AG04449 (cell line): ENCODE measurements at regions of chr15 and their contacts with region 1.

Region 1: DNA sequence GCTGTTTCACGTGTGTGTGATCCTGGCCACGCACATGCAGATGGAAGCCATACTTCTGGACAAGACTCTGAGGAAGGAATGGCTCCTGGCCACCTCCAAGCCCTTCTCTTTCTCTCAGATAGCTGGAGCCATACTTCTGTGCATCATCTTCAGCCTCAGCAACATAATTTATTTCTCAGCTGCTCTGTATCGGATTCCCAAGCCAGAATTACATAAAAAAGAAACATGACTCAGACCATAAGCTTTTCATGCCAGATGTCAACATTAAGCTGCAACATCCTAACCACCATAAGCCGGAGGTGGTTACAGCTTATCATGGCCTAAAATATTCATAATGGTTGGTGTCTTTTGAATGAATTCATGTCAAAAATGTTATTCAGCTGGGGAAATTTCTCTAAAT is 10.6 kb upstream of the KIF23 start:
- DNase-seq: peak; percentile 72
- H3K4me3 ChIP-seq: no peak overlapping the region
- CTCF ChIP-seq: no peak

Region 2: DNA sequence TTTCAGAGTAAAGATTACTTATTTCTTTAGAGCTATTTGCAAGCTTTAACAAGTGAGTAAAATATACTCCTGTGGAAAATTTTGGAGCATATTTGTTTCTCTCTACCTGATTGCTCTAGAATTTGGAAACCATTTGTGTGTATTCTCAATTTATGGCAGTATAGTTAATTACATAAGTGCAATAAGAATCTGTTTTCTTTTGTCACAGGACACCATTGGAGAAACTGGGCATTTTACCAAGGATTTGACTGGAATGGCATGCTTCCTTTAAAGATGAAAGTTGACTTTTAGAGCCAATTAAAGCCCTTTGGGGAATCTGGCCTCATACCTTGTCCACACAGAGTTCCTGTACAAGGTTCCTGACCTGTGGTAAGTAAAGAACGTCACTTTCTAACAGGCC is 66.5 kb before region 1 on chr15:
- CTCF ChIA-PET with region 1: no interaction called
- POLR2A ChIA-PET with region 1: no interaction called
- DNase-seq: peak; percentile 19
- H3K4me3 ChIP-seq: no peak overlapping the region
- CTCF ChIP-seq: no peak

Region 3: DNA sequence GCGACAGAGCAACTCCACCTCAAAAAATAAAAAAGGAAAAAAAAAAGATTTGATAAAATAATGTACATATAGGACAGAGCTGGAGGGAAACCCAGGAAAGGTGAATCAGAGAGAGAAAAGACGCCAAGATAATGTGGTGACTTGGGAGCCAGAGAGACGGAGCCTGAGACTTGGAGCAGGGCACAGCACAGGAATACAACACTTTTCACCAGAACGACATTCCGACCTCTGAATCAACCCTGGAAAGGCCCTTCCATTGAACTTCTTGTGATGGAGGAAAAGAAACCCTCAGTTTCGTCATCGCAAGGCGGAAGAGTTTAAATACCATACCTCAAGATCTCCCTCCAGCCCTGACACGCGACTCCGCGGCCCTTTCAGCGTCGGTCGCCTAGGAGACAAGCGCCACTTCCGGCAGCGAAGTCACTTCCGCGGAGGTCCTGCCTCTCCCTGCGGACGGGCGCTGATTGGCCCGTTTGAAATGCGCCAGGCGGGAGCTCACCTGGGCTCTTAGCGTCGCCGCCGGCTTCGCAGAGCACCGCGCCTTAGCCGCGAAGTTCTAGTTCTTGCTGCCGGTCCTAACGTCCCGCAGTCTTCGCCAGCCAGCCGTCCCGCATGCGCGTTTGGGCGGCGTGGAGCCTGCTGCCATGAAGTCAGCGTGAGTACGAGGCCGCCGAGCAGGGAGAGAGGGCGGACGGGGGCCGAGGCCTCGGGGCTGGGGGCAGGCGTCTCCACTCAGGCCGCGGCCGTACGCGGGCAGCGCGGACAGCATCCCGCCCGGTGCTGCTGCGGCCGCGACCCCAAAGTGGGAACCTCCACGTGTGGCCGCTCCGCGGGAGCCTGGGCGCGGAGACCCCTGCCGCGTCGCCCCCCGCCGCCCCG is 10.5 kb after region 1 on chr15 and contains the start of gene KIF23:
- CTCF ChIA-PET with region 1: interaction called, 3 read pairs
- POLR2A ChIA-PET with region 1: interaction called, 13 read pairs
- DNase-seq: peak; percentile 67
- H3K4me3 ChIP-seq: peak within 1 kb of the TSS; percentile 98
- CTCF ChIP-seq: no peak

Region 4: DNA sequence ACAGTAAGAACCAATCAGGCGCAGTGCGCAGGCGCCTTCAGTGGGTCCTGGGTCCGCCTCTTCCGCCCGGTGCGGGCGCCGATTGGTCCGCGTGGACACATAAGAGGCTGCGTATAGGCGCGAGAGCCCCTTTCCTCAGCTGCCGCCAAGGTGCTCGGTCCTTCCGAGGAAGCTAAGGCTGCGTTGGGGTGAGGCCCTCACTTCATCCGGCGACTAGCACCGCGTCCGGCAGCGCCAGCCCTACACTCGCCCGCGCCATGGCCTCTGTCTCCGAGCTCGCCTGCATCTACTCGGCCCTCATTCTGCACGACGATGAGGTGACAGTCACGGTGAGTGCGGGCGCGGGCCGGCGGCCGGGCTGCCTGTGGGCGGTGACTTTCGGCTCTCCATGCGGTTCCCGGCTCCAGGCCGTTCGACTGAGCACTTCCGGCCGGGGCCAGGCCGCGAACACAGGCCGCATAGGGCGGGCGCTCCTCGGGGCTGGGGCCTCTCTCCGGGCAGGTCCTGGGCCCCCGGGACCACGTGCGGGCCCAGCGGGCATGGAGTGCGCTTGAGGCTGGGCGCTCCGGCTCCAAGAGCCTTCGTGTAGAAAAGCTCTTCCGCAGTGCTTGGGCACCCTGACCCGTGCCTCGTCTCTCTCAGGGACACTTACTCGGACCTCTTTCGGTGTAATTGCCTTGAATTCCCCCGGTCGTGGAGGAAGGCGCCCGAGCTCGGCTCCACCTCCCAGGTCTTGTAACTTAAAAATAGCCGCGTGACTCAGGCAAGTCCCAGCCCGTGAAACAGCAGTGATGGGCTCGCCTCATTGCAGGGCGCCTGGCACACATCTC is 49.3 kb after region 1 on chr15 and contains the start of gene RPLP1:
- CTCF ChIA-PET with region 1: no interaction called
- POLR2A ChIA-PET with region 1: interaction called, 11 read pairs
- DNase-seq: peak; percentile 67
- H3K4me3 ChIP-seq: peak within 1 kb of the TSS; percentile 92
- CTCF ChIP-seq: no peak

Region 5: DNA sequence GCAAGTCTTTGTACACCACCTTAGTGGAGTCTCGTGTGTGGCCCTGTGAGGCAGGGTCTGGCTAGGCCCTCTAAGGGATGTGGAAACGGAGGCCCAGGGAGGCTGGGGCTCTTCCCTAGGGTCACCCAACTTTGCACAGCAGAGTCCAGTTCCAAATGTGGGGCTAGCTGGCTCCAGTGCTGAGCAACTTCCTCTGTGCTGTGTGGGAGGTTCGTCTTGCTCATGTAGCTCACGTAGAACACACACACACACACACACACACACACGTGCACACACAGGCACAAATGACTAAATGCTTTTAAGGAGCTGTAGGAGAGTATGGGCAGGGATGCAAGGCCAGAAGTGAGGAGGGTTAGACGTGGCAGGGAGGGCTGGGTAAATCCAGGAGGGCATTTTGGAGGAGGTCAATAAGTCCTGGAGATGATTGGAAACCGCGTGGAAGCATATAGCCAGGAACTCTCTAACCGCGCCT is 262.9 kb after region 1 on chr15:
- CTCF ChIA-PET with region 1: no interaction called
- POLR2A ChIA-PET with region 1: no interaction called
- DNase-seq: no peak
- H3K4me3 ChIP-seq: no peak overlapping the region
- CTCF ChIP-seq: no peak